Breast epithelium (tissue), 4 donors: ENCODE measurements at regions of chr14 and their contacts with region 1.

Region 1: DNA sequence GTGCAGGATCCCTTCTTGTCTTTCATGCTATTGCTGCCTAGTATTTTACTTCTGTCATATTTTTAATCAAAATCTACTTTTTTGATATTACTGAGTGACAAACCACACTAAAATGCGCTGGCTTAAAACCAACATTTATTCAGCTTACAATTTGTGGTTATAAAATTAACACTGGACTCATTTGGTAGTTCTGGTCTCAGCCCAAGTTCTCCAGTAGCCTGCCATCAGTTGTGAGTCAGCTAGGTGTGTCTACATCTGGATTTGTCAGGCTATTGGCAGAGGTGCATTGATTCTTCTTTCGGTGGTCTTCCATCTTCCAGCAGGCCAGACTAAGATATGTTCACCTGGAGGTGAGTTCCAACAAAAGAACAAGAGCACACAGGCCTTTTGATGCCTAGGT is 765.1 kb upstream of the FBXO33 start:
- DNase-seq: no peak
- H3K4me3 ChIP-seq: no peak overlapping the region
- H3K27ac ChIP-seq: no peak overlapping the region
- H3K4me1 ChIP-seq: no peaks in the 10 kb centered on the region
- H3K27me3 ChIP-seq: no peaks in the 10 kb centered on the region
- CTCF ChIP-seq: no peak
- POLR2A ChIP-seq: no peak

Region 2: GRCh38 chr14:39203659-39204606 is 993.4 kb before region 1 on chr14:
- intact Hi-C with region 1: loop called (anchors 10 kb)
- DNase-seq: no peak
- H3K4me3 ChIP-seq: no peak overlapping the region
- H3K27ac ChIP-seq: no peak overlapping the region
- H3K4me1 ChIP-seq: no peaks in the 10 kb centered on the region
- H3K27me3 ChIP-seq: no peaks in the 10 kb centered on the region
- CTCF ChIP-seq: no peak
- POLR2A ChIP-seq: no peak